ENCODE measurements at regions of chrX and their contacts with region 1.

Region 1: GRCh38 chrX:68498508-68499379 is at the start of gene YIPF6:
- DNase-seq: peak; percentile 72 to 81 (median 73)
- H3K4me3 ChIP-seq: peak within 1 kb of the TSS; percentile 50 to 82 (median 80)
- H3K4me3 Mint-ChIP-seq: peak within 1 kb of the TSS; percentile 86 to 95
- H3K27ac ChIP-seq: peak within 1 kb of the TSS; percentile 90 to 94
- H3K27ac Mint-ChIP-seq: peak within 1 kb of the TSS; percentile 98 to 99 (median 99)
- H3K4me1 ChIP-seq: peaks cover 10 to 11% of the 10 kb centered on the region in 2 donors
- H3K4me1 Mint-ChIP-seq: peaks cover 5% of the 10 kb centered on the region
- H3K27me3 ChIP-seq: no peaks in the 10 kb centered on the region
- H3K27me3 Mint-ChIP-seq: peaks cover 0 to 8% (median 2%) of the 10 kb centered on the region in 3 donors
- CTCF ChIP-seq: no peak
- polyA plus RNA-seq, gene YIPF6: 3.8 to 23.6 (median 21.0) TPM

Region 2: DNA sequence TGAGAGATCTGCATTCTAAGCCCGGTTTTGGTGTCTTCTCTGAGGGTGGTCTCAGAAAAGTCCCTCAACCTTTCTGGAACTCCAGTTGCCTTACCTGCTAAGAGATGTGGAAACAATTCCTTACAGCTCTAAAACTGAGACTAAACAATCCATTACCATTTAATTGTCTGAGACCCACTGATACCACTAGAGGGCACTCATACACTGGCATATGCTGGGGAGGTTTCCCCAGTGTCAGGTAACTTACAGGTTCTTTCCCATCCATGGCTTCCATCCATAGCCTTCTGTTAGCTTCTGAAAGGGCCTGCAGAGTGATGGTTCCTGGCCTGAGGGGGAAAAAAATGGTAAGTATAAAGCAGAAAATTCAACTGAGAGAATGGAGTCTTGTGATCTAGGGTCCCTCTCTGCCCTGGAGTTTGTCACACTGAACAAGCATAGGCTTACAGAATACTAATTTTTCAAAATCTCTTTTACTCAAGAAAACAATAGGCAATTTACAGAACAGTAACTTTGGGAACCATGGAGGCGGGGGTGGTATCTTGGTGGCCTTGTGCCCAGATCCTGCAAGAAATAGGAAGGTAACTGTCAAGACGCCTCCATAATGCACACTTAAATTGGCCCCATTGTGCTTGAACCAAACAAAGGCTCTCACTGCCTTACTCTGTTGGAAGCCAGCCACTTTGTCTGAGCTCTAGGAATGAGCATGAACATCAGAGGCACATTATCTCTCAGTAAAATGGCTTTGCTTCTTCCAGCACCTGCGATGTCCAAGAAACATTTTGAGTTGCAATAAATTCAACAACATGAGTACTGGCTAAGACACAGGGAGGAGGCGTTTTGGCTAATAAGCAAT is 301.6 kb before region 1 on chrX:
- intact Hi-C with region 1: loop called in 1 of 2 experiments (anchors 10 kb)
- DNase-seq: peak in 2 of 3 donors; percentile 22 to 26
- H3K4me3 ChIP-seq: no peak overlapping the region
- H3K4me3 Mint-ChIP-seq: no peak overlapping the region
- H3K27ac ChIP-seq: no peak overlapping the region
- H3K27ac Mint-ChIP-seq: no peak overlapping the region
- H3K4me1 ChIP-seq: no peaks in the 10 kb centered on the region
- H3K4me1 Mint-ChIP-seq: no peaks in the 10 kb centered on the region
- H3K27me3 ChIP-seq: no peaks in the 10 kb centered on the region
- H3K27me3 Mint-ChIP-seq: no peaks in the 10 kb centered on the region
- CTCF ChIP-seq: peak; percentile 68

Measured in CD14-positive monocyte (primary cell).